Endothelial cell of umbilical vein (primary cell): ENCODE measurements at regions of chr13 and their contacts with region 1.

Region 1: GRCh38 chr13:107574517-107575210 is 640.7 kb downstream of the LIG4 start:
- DNase-seq: peak; percentile 70
- H3K4me3 ChIP-seq: no peak overlapping the region
- H3K27ac ChIP-seq: no peak overlapping the region
- H3K4me1 ChIP-seq: peaks cover 22% of the 10 kb centered on the region
- H3K27me3 ChIP-seq: no peaks in the 10 kb centered on the region
- CTCF ChIP-seq: no peak
- POLR2A ChIP-seq: no peak

Region 2: DNA sequence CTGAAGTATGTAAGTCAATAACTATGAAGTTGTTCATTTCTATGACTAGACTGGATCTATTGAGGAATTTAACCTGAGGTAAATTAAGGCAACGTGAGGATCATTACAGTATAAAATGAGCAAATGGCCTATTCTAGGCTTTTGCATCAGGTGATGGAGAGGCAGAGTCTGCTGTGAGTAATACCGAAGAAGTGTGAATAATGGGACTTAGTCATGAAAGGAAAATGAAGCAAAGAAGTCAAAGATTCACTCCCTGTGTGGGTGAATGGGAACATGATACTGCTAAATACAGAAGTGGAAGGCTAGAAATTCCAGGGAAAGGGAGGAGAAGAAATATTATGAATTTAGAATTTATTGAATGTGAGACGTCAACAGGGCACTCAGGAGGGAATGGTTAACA is 133.4 kb before region 1 on chr13:
- CTCF ChIA-PET with region 1: no interaction called
- POLR2A ChIA-PET with region 1: no interaction called
- dilution Hi-C with region 1: no loop called
- intact Hi-C with region 1: no loop called
- DNase-seq: no peak
- H3K4me3 ChIP-seq: no peak overlapping the region
- H3K27ac ChIP-seq: no peak overlapping the region
- H3K4me1 ChIP-seq: no peaks in the 10 kb centered on the region
- H3K27me3 ChIP-seq: no peaks in the 10 kb centered on the region
- CTCF ChIP-seq: no peak
- POLR2A ChIP-seq: no peak

Region 3: GRCh38 chr13:107585469-107586180 is 11.0 kb after region 1 on chr13:
- CTCF ChIA-PET with region 1: no interaction called
- POLR2A ChIA-PET with region 1: no interaction called
- dilution Hi-C with region 1: no loop called
- intact Hi-C with region 1: loop called (anchors 2 kb)
- DNase-seq: peak; percentile 78
- H3K4me3 ChIP-seq: no peak overlapping the region
- H3K27ac ChIP-seq: no peak overlapping the region
- H3K4me1 ChIP-seq: peaks cover 13% of the 10 kb centered on the region
- H3K27me3 ChIP-seq: no peaks in the 10 kb centered on the region
- CTCF ChIP-seq: no peak
- POLR2A ChIP-seq: no peak

Region 4: GRCh38 chr13:107977071-107977574 is 402.5 kb after region 1 on chr13:
- CTCF ChIA-PET with region 1: no interaction called
- POLR2A ChIA-PET with region 1: no interaction called
- dilution Hi-C with region 1: no loop called
- intact Hi-C with region 1: no loop called
- DNase-seq: no peak
- H3K4me3 ChIP-seq: no peak overlapping the region
- H3K27ac ChIP-seq: no peak overlapping the region
- H3K4me1 ChIP-seq: no peaks in the 10 kb centered on the region
- H3K27me3 ChIP-seq: no peaks in the 10 kb centered on the region
- CTCF ChIP-seq: no peak
- POLR2A ChIP-seq: no peak